ENCODE measurements at regions of chr10 and their contacts with region 1.

Region 1: GRCh38 chr10:68720793-68721672 is at the start of gene CCAR1:
- DNase-seq: peak; percentile 96
- ATAC-seq: peak; percentile 99
- H3K4me3 ChIP-seq: peak within 1 kb of the TSS; percentile 83
- H3K27ac ChIP-seq: peak within 1 kb of the TSS; percentile 88
- H3K4me1 ChIP-seq: no peaks in the 10 kb centered on the region
- H3K27me3 ChIP-seq: no peaks in the 10 kb centered on the region
- CTCF ChIP-seq: no peak
- EP300 ChIP-seq: no peak
- POLR2A ChIP-seq: peak; percentile 86
- RAD21 ChIP-seq: no peak
- polyA plus RNA-seq, gene CCAR1: 35.5 to 48.8 TPM

Region 2: GRCh38 chr10:68261132-68261856 is 459.7 kb before region 1 on chr10:
- CTCF ChIA-PET with region 1: no interaction called
- POLR2A ChIA-PET with region 1: no interaction called
- RAD21 ChIA-PET with region 1: no interaction called
- SMC1A ChIA-PET with region 1: no interaction called
- in situ Hi-C with region 1: no loop called
- intact Hi-C with region 1: no loop called
- DNase-seq: no peak
- ATAC-seq: no peak
- H3K4me3 ChIP-seq: no peak overlapping the region
- H3K27ac ChIP-seq: no peak overlapping the region
- H3K4me1 ChIP-seq: no peaks in the 10 kb centered on the region
- H3K27me3 ChIP-seq: no peaks in the 10 kb centered on the region
- CTCF ChIP-seq: no peak
- EP300 ChIP-seq: no peak
- POLR2A ChIP-seq: no peak
- RAD21 ChIP-seq: no peak

Region 3: GRCh38 chr10:68550747-68551411 is 170.2 kb before region 1 on chr10:
- CTCF ChIA-PET with region 1: no interaction called
- POLR2A ChIA-PET with region 1: no interaction called
- RAD21 ChIA-PET with region 1: no interaction called
- SMC1A ChIA-PET with region 1: no interaction called
- in situ Hi-C with region 1: no loop called
- intact Hi-C with region 1: loop called (anchors 5 kb)
- DNase-seq: no peak
- ATAC-seq: peak; percentile 93
- H3K4me3 ChIP-seq: no peak overlapping the region
- H3K27ac ChIP-seq: no peak overlapping the region
- H3K4me1 ChIP-seq: no peaks in the 10 kb centered on the region
- H3K27me3 ChIP-seq: no peaks in the 10 kb centered on the region
- CTCF ChIP-seq: peak; percentile 77 to 90 (median 89)
- EP300 ChIP-seq: no peak
- POLR2A ChIP-seq: no peak
- RAD21 ChIP-seq: peak; percentile 88

Region 4: DNA sequence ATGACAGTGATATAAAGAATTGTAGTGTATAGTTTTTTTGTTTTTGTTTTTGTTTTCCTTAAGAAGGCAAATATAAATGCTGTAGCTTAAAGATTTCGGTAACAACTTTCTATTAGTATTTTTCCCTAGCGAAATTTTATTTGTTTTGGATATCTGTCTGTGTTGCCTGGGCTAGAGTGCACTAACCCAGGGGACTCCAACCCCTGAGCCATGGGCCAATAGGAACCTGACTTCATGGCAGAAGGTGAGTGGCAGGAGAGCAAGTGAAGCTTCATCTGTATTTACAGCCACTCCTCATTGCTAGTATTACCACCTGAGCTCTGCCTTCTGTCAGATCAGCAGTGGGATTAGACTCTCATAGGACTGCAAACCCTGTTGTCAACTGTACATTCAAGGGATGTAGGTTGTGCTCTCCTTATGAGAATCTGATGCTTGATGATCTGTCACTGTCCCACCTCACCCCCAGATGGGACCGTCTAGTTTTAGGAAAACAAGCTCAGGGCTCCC is 65.4 kb before region 1 on chr10:
- CTCF ChIA-PET with region 1: no interaction called
- POLR2A ChIA-PET with region 1: no interaction called
- RAD21 ChIA-PET with region 1: no interaction called
- SMC1A ChIA-PET with region 1: no interaction called
- in situ Hi-C with region 1: no loop called
- intact Hi-C with region 1: no loop called
- DNase-seq: no peak
- ATAC-seq: no peak
- H3K4me3 ChIP-seq: no peak overlapping the region
- H3K27ac ChIP-seq: no peak overlapping the region
- H3K4me1 ChIP-seq: no peaks in the 10 kb centered on the region
- H3K27me3 ChIP-seq: no peaks in the 10 kb centered on the region
- CTCF ChIP-seq: no peak
- EP300 ChIP-seq: no peak
- POLR2A ChIP-seq: no peak
- RAD21 ChIP-seq: no peak

Region 5: DNA sequence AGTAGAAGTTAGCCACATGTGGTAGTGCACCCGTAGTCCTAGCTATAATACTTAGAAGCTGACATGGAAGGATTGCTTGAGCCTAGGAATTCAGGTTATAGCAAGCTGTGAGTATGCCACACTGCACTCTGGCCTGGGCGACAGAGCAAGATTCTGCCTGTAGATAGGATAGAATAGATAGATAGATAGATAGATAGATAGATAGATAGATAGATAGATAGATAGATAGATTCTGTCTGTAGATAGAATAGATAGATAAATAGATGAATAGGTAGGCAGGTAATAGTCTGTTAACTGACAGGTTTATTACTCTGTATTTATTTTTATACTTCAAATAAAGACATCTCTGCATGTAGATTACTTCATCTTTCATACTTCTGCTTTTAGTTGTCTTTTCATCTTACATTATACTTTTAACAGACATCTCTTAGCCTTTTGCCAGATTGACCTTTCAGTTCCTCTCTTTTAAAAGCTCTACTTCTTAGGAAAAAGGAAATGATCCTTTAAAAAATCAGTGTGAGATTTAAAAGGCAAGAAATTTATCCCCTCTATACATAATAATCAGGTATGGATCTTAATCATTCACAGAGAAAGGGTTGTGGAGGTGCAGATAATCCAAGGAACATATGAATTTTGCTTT is 31.8 kb after region 1 on chr10:
- CTCF ChIA-PET with region 1: no interaction called
- POLR2A ChIA-PET with region 1: no interaction called
- RAD21 ChIA-PET with region 1: no interaction called
- SMC1A ChIA-PET with region 1: no interaction called
- in situ Hi-C with region 1: no loop called
- intact Hi-C with region 1: no loop called
- DNase-seq: no peak
- ATAC-seq: no peak
- H3K4me3 ChIP-seq: no peak overlapping the region
- H3K27ac ChIP-seq: no peak overlapping the region
- H3K4me1 ChIP-seq: no peaks in the 10 kb centered on the region
- H3K27me3 ChIP-seq: no peaks in the 10 kb centered on the region
- CTCF ChIP-seq: no peak
- EP300 ChIP-seq: no peak
- POLR2A ChIP-seq: no peak
- RAD21 ChIP-seq: no peak

Measured in GM12878 (cell line).